BJ (cell line): ENCODE measurements at regions of chr18 and their contacts with region 1.

Region 1: GRCh38 chr18:26511339-26512071 is 36.8 kb downstream of the KCTD1 start:
- DNase-seq: no peak
- H3K4me3 ChIP-seq: no peak overlapping the region
- H3K27me3 ChIP-seq: no peaks in the 10 kb centered on the region
- CTCF ChIP-seq: no peak

Region 2: GRCh38 chr18:26526128-26526965 is 14.8 kb after region 1 on chr18:
- CTCF ChIA-PET with region 1: interaction called, 5 read pairs
- POLR2A ChIA-PET with region 1: interaction called, 23 read pairs
- DNase-seq: no peak
- H3K4me3 ChIP-seq: no peak overlapping the region
- H3K27me3 ChIP-seq: no peaks in the 10 kb centered on the region
- CTCF ChIP-seq: no peak

Region 3: GRCh38 chr18:26614374-26614773 is 102.9 kb after region 1 on chr18:
- CTCF ChIA-PET with region 1: no interaction called
- POLR2A ChIA-PET with region 1: no interaction called
- DNase-seq: no peak
- H3K4me3 ChIP-seq: no peak overlapping the region
- H3K27me3 ChIP-seq: no peaks in the 10 kb centered on the region
- CTCF ChIP-seq: no peak

Region 4: GRCh38 chr18:26656944-26657536 is 145.5 kb after region 1 on chr18:
- CTCF ChIA-PET with region 1: no interaction called
- POLR2A ChIA-PET with region 1: no interaction called
- DNase-seq: no peak
- H3K4me3 ChIP-seq: peak overlapping the region; percentile 58
- H3K27me3 ChIP-seq: peaks cover 26% of the 10 kb centered on the region
- CTCF ChIP-seq: peak; percentile 34